Dendritic cell treated with granulocyte-macrophage colony-stimulating factor and Interleukin-4, amounts not matched to agents 40 ng/mL and 50 ng/mL, for 4 days (primary cell): ENCODE measurements at regions of chr1 and their contacts with region 1.

Region 1: DNA sequence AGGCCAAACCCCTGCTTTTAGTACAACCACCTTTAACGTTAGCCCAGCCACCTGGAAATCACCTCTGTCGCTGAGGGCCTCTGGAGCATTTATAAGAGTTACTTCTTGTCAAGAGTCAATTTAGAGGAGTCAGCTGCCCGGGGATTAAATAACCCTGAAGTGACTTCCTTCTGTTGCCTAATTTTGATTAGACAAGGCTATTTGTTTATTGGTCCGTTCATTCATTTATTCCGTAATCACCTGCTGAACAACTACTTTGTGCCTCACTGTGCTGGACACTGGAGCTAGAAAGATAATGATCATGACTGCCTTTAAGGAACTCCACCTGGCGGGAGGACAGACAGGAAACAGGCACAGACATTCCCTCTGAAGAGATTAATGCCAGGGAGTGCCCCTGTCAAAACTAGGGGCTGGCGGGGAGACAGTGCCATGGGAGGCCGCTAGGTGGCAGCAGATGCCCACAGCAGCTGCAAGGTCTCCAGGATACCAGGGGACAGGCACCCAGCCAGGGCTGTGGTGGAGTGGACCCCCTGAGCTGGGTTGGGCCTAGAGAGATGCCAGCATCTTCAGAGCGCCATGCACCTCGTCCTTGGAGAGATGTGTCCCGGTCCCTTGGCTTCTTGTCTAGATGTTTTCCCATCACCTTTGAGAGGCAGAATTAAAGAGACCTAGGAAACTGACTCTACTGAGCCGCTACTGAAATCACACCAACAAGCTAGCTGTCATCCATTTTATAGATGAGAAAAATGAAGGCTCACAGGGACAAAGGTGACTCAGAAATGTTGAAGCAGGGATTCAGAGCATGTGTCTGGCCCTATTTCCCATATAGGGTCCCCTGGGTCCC is 3.7 kb downstream of the REN start:
- H3K4me3 Mint-ChIP-seq: no peak overlapping the region
- H3K27ac Mint-ChIP-seq: no peak overlapping the region
- H3K4me1 Mint-ChIP-seq: peaks cover 15% of the 10 kb centered on the region
- H3K27me3 Mint-ChIP-seq: peaks cover 17% of the 10 kb centered on the region

Region 2: DNA sequence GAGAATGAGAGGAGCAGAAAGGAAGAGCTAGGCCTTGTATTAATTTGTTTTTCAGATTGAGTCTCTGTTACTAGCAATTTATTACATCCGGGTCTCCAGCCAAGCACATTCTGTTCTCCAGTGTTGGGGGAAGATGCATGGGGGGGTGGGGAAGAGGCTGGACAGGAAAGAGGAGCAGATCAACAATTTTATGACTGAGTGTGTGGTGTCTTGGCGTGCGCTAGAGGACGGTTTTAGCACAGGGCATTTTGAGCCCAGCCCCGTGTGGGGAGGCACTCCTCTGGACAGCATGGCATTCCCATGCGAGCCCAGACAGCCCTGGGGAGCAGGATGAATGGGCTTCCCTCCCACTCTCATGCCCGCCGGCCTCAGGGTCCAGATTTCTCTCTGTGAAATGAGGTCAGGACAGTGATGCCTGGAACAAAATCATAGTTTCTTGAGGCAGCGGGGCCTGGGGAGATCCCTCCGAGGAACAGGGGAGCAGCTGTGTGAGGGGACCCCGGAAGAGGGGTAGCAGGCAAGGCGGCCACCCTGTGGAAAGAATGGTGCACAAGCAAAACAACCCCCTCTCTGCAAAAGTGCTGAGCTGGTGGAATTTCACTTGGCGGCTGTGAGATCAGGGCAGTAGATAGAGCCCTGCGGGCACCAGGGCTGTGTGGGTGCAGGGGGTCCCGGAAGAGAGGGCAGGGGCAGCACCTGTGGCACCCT is 73.3 kb before region 1 on chr1:
- intact Hi-C with region 1: no loop called
- H3K4me3 Mint-ChIP-seq: no peak overlapping the region
- H3K27ac Mint-ChIP-seq: no peak overlapping the region
- H3K4me1 Mint-ChIP-seq: no peaks in the 10 kb centered on the region
- H3K27me3 Mint-ChIP-seq: peaks cover 2% of the 10 kb centered on the region

Region 3: GRCh38 chr1:204207136-204207616 is 44.7 kb after region 1 on chr1:
- intact Hi-C with region 1: loop called (anchors 1 kb)
- H3K4me3 Mint-ChIP-seq: no peak overlapping the region
- H3K27ac Mint-ChIP-seq: no peak overlapping the region
- H3K4me1 Mint-ChIP-seq: no peaks in the 10 kb centered on the region
- H3K27me3 Mint-ChIP-seq: peaks cover 27% of the 10 kb centered on the region

Region 4: GRCh38 chr1:204335085-204335484 is 172.6 kb after region 1 on chr1:
- intact Hi-C with region 1: no loop called
- H3K4me3 Mint-ChIP-seq: no peak overlapping the region
- H3K27ac Mint-ChIP-seq: no peak overlapping the region
- H3K4me1 Mint-ChIP-seq: peaks cover 6% of the 10 kb centered on the region
- H3K27me3 Mint-ChIP-seq: peaks cover 6% of the 10 kb centered on the region

Region 5: GRCh38 chr1:204363335-204364124 is 201.1 kb after region 1 on chr1:
- intact Hi-C with region 1: loop called (anchors 1 kb)
- H3K4me3 Mint-ChIP-seq: peak overlapping the region; percentile 72
- H3K27ac Mint-ChIP-seq: peak overlapping the region; percentile 50
- H3K4me1 Mint-ChIP-seq: peaks cover 36% of the 10 kb centered on the region
- H3K27me3 Mint-ChIP-seq: peaks cover 63% of the 10 kb centered on the region

Region 6: GRCh38 chr1:204398217-204399081 is 236.0 kb after region 1 on chr1:
- intact Hi-C with region 1: loop called (anchors 1 kb)
- H3K4me3 Mint-ChIP-seq: no peak overlapping the region
- H3K27ac Mint-ChIP-seq: no peak overlapping the region
- H3K4me1 Mint-ChIP-seq: peaks cover 8% of the 10 kb centered on the region
- H3K27me3 Mint-ChIP-seq: peaks cover 3% of the 10 kb centered on the region